ENCODE measurements at regions of chr9 and their contacts with region 1.

Region 1: GRCh38 chr9:87324613-87325194 is 173.0 kb upstream of the DAPK1 start:
- DNase-seq: peak; percentile 31 to 49
- ATAC-seq: peak; percentile 73 to 89; a peak in 5 of 6 replicates
- H3K4me3 ChIP-seq: no peak overlapping the region
- H3K27ac ChIP-seq: no peak overlapping the region
- H3K4me1 ChIP-seq: peaks cover 7% of the 10 kb centered on the region; the same call in 1 of the 3 replicates
- CTCF ChIP-seq: peak; percentile 85
- EP300 ChIP-seq: no peak
- POLR2A ChIP-seq: no peak
- RAD21 ChIP-seq: peak; percentile 91 to 93

Region 2: DNA sequence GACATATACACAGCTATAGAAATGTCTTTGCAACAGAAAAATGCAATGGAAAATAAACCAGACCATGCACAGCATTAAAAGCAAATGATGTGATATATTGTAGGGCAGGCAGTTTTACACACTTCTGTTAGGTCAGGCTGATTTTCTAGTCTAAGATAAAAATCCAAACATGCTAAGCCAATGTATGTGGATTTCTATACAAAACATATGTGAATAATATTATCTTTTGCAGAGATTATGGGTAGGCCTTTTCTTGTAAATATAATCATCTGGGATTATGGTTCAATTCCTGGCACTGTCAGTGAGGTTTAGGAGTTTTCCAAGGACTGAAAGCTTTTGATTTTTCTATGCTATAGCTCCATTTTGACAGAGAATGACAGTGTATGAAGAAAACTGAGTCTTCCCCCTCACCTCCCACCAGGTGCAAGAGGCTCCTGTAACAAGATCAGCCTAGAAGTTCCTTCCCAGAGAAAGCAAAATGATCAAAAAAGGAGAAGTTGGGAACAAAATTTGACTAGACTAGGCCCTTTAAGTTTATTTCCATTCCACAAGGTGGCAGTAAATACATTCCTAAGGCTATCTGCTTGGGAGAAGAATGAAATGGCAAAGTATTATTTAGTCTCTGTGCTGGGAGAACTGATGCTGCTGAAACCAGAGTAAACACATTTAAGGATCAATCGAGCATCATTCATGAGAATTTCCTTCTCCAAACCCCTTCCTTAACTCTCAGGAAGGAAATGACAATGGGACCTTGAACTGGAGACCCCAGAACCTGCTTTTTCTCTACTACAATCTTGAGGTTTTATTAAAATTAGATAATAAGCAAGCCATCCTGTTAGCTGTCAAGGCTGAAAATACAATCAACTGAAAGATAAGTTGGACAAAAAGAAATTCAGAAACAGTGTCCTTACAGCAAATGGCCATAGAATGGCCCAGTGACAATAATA is 837.5 kb before region 1 on chr9:
- CTCF ChIA-PET with region 1: interaction called, 102 read pairs
- POLR2A ChIA-PET with region 1: no interaction called
- DNase-seq: peak; percentile 44 to 55
- ATAC-seq: peak; percentile 79 to 80
- H3K4me3 ChIP-seq: no peak overlapping the region
- H3K27ac ChIP-seq: no peak overlapping the region
- H3K4me1 ChIP-seq: no peaks in the 10 kb centered on the region
- CTCF ChIP-seq: peak; percentile 66
- EP300 ChIP-seq: no peak
- POLR2A ChIP-seq: no peak
- RAD21 ChIP-seq: peak; percentile 76 to 80

Region 3: GRCh38 chr9:87140605-87141109 is 184.0 kb before region 1 on chr9:
- CTCF ChIA-PET with region 1: no interaction called
- POLR2A ChIA-PET with region 1: no interaction called
- DNase-seq: no peak
- ATAC-seq: no peak
- H3K4me3 ChIP-seq: no peak overlapping the region
- H3K27ac ChIP-seq: no peak overlapping the region
- H3K4me1 ChIP-seq: no peaks in the 10 kb centered on the region
- CTCF ChIP-seq: no peak
- EP300 ChIP-seq: no peak
- POLR2A ChIP-seq: no peak
- RAD21 ChIP-seq: no peak

Region 4: GRCh38 chr9:87309236-87309635 is 15.5 kb before region 1 on chr9:
- CTCF ChIA-PET with region 1: interaction called, 18 read pairs
- POLR2A ChIA-PET with region 1: no interaction called
- DNase-seq: no peak
- ATAC-seq: no peak
- H3K4me3 ChIP-seq: no peak overlapping the region
- H3K27ac ChIP-seq: no peak overlapping the region
- H3K4me1 ChIP-seq: no peaks in the 10 kb centered on the region
- CTCF ChIP-seq: no peak
- EP300 ChIP-seq: no peak
- POLR2A ChIP-seq: no peak
- RAD21 ChIP-seq: no peak

Region 5: DNA sequence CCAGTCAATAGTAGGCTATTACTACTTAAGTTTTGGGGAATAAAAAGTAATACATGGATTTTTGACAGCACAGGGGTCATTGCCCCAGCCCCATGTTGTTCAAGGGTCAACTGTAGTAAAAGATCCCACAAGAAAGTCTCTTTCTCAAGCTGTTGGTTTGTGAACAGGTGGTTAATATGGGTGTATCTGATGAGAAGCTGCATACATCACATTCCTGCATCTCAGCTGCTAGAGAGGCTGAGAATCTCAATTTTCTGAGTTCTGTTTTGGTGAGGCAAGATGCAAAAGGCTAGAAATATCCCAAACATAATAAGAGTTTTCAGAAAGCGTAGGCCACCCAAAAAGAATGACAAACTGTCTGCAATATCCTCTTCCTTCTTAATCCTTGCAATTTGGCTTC is 96.2 kb after region 1 on chr9:
- CTCF ChIA-PET with region 1: no interaction called
- POLR2A ChIA-PET with region 1: no interaction called
- DNase-seq: no peak
- ATAC-seq: no peak
- H3K4me3 ChIP-seq: no peak overlapping the region
- H3K27ac ChIP-seq: no peak overlapping the region
- H3K4me1 ChIP-seq: no peaks in the 10 kb centered on the region
- CTCF ChIP-seq: no peak
- EP300 ChIP-seq: no peak
- POLR2A ChIP-seq: no peak
- RAD21 ChIP-seq: no peak